K562 (cell line): ENCODE measurements at regions of chr3 and their contacts with region 1.

Region 1: DNA sequence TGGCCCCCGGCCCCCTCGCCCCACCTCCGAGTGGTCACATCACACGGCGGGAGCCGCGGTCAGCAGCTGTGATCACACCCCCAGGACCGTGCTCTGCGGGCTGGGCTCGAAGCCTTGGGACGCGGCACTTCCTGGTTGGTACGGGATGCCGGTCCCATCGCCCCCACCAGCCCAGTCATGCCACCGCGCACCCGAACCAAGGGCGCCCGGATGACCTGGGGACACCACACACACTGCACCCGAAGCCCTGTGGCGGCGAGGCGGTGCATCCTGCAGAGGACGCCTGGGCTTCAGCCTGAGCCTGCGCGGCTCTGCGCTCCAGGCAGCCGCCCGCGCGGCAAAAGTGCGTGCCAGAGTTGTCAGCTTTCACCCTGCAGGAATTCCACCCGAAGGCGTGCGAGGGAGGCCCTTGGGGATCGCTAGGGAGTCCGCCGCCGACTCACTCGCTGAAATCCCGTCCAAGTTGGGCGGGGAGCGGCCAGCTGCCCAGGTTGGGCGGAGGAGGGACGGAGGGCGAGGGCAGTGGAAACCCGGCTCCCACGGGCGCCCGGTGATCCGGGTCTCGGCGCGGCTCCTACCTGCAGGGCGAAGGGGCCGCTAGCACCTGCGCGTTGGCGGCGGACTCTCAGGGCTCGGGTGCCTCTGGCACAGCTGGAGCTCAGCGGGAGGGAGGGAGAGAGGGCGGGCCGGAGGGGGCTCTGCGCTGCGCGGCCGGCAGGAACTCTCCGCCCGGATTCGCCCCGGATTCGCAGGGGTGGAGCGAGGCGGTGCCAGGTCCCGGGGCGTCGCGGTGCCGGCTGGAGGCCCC is at the start of gene PLD1:
- DNase-seq: peak; percentile 71 to 88 (median 80)
- ATAC-seq: peak; percentile 83
- H3K4me3 ChIP-seq: peak within 1 kb of the TSS; percentile 81
- H3K27ac ChIP-seq: peak within 1 kb of the TSS; percentile 84
- H3K4me1 ChIP-seq: peaks cover 32 to 53% of the 10 kb centered on the region in 2 experiments
- H3K27me3 ChIP-seq: no peaks in the 10 kb centered on the region
- CTCF ChIP-seq: peak in 1 of 3 experiments; percentile 19; a peak in 1 of 6 replicates
- EP300 ChIP-seq: no peak
- POLR2A ChIP-seq: peak; percentile 36; the same call in 1 of the 2 replicates
- RAD21 ChIP-seq: no peak; a peak in 1 of 4 replicates
- polyA plus RNA-seq, gene PLD1: 25.3 to 26.1 TPM

Region 2: DNA sequence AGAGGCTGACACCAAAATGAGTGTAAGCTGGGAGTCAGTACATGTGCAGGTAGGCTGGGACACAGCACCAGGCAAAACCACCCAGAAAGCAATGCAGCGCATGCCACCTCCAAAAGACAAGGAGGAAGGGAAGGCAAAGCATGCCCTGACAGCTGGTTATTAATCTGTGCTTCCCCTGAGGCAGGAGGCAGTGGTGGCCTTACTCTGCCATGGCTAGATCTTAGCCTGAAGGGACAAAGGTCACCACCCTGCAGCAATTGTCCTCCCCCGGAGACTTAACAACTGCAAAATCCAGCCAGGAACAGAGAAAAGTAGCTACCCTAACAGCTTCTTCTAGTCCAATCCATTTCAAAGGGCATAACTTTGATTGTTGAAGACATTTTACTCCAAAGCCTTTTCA is 73.5 kb before region 1 on chr3:
- CTCF ChIA-PET with region 1: no interaction called
- POLR2A ChIA-PET with region 1: no interaction called
- in situ Hi-C with region 1: no loop called
- intact Hi-C with region 1: no loop called
- DNase-seq: no peak
- ATAC-seq: no peak
- H3K4me3 ChIP-seq: no peak overlapping the region
- H3K27ac ChIP-seq: no peak overlapping the region
- H3K4me1 ChIP-seq: no peaks in the 10 kb centered on the region
- H3K27me3 ChIP-seq: no peaks in the 10 kb centered on the region
- CTCF ChIP-seq: no peak
- EP300 ChIP-seq: no peak
- POLR2A ChIP-seq: no peak
- RAD21 ChIP-seq: no peak

Region 3: GRCh38 chr3:171797265-171797679 is 12.8 kb before region 1 on chr3:
- CTCF ChIA-PET with region 1: no interaction called
- POLR2A ChIA-PET with region 1: interaction called, 11 read pairs
- in situ Hi-C with region 1: no loop called
- intact Hi-C with region 1: no loop called
- DNase-seq: no peak
- ATAC-seq: peak; percentile 54
- H3K4me3 ChIP-seq: no peak overlapping the region
- H3K27ac ChIP-seq: peak overlapping the region; percentile 61; the same call in 1 of the 3 replicates
- H3K4me1 ChIP-seq: peaks cover 8 to 38% of the 10 kb centered on the region in 2 experiments; a peak in 4 of 5 replicates
- H3K27me3 ChIP-seq: no peaks in the 10 kb centered on the region
- CTCF ChIP-seq: no peak
- EP300 ChIP-seq: no peak
- POLR2A ChIP-seq: no peak
- RAD21 ChIP-seq: no peak

Region 4: DNA sequence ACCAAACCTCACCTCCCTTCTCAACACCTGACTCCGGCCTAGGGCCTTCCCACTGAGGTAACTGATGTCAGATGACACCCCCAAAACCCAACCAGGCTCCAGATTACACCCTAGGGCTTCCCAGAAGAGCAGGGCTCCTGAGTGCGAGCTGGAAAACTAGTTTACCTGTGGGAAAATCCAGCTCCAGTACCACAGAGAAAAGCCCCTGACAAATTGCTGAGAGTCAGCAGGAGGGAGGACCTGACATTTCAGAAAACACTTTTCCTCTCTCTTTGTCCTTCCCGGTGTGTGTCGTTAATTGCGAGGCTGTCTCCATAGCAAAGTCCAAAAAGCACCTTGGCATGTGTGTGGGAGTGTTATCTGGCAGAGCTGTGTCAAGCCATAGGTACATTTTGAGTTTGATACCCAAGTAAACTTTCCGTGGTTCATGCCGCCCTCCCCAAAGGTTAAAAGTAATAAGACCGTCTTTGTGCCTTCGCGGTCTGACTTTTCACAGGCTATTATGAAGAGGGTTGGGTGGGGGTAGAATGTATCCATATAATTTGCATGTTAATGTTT is 149.6 kb after region 1 on chr3:
- CTCF ChIA-PET with region 1: no interaction called
- POLR2A ChIA-PET with region 1: no interaction called
- in situ Hi-C with region 1: no loop called
- intact Hi-C with region 1: loop called (anchors 5 kb)
- DNase-seq: peak in 1 of 4 experiments; percentile 42
- ATAC-seq: peak; percentile 2; the same call in 2 of the 3 replicates
- H3K4me3 ChIP-seq: no peak overlapping the region
- H3K27ac ChIP-seq: peak overlapping the region; percentile 82
- H3K4me1 ChIP-seq: peaks cover 11 to 49% of the 10 kb centered on the region in 2 experiments; a peak in 4 of 5 replicates
- H3K27me3 ChIP-seq: no peaks in the 10 kb centered on the region
- CTCF ChIP-seq: no peak
- EP300 ChIP-seq: no peak
- POLR2A ChIP-seq: no peak
- RAD21 ChIP-seq: no peak